Common myeloid progenitor, CD34-positive (primary cell): ENCODE measurements at regions of chr3 and their contacts with region 1.

Region 1: GRCh38 chr3:14467814-14468620 is 65.6 kb downstream of the SLC6A6 start:
- DNase-seq: peak; percentile 14 to 49 (median 32)
- H3K4me3 ChIP-seq: no peak overlapping the region
- H3K27ac ChIP-seq: no peak overlapping the region
- H3K4me1 ChIP-seq: no peaks in the 10 kb centered on the region
- H3K27me3 ChIP-seq: no peaks in the 10 kb centered on the region

Region 2: DNA sequence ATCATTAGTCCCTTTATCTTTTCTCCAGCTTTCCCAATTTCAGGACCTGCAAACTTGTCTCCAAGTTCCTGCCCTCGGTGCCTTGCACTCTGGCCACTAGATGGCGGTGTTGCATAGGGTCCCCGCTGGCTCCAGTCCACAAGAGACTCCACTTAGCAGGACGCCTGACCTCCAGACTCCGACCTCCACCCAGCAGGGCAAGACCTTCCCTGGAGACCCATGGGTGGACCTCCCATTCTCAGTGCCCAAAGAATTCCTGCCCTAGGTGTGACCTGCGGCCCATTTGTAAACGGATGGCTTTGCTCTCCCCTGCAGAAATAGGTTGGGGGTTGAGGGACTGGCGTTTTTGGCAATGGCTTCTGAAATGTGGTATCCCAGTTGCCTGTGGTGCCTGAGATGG is 206.8 kb before region 1 on chr3:
- CTCF ChIA-PET with region 1: interaction called, 123 read pairs
- POLR2A ChIA-PET with region 1: interaction called, 3 read pairs
- DNase-seq: peak; percentile 59 to 68 (median 65)
- H3K4me3 ChIP-seq: no peak overlapping the region
- H3K27ac ChIP-seq: no peak overlapping the region
- H3K4me1 ChIP-seq: peaks cover 0 to 4% (median 2%) of the 10 kb centered on the region in 4 experiments
- H3K27me3 ChIP-seq: peaks cover 0 to 2% (median 0%) of the 10 kb centered on the region in 5 experiments

Region 3: DNA sequence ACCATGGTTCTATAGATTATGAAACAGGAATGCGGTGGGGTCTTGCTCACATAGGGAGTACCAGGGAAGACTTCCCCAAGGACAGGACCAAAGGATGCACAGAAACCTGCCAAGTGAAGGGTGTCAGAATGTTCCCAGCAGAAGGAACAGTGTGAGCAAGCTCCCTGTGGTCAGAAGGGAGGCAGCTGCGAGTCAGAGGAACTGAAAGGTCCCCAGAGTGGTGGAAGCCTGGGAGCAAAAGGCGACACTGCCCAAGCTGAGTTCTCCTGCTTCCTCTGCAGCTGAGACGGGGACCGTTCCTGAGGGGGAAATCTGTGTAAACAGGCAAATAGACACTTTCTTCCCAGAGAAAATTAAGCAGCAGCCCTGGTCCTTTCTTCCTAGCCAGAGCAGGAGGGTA is 79.8 kb before region 1 on chr3:
- CTCF ChIA-PET with region 1: interaction called, 14 read pairs
- POLR2A ChIA-PET with region 1: no interaction called
- DNase-seq: no peak
- H3K4me3 ChIP-seq: no peak overlapping the region
- H3K27ac ChIP-seq: no peak overlapping the region
- H3K4me1 ChIP-seq: peaks cover 0 to 14% (median under 1%) of the 10 kb centered on the region in 4 experiments
- H3K27me3 ChIP-seq: no peaks in the 10 kb centered on the region

Region 4: GRCh38 chr3:14431892-14432834 is 35.9 kb before region 1 on chr3:
- CTCF ChIA-PET with region 1: interaction called, 30 read pairs
- POLR2A ChIA-PET with region 1: no interaction called
- DNase-seq: peak; percentile 97 to 99 (median 99)
- H3K4me3 ChIP-seq: peak overlapping the region in 5 of 7 experiments; percentile 16 to 62 (median 49)
- H3K27ac ChIP-seq: peak overlapping the region; percentile 90 to 94
- H3K4me1 ChIP-seq: peaks cover 22 to 97% (median 89%) of the 10 kb centered on the region in 4 experiments
- H3K27me3 ChIP-seq: no peaks in the 10 kb centered on the region

Region 5: DNA sequence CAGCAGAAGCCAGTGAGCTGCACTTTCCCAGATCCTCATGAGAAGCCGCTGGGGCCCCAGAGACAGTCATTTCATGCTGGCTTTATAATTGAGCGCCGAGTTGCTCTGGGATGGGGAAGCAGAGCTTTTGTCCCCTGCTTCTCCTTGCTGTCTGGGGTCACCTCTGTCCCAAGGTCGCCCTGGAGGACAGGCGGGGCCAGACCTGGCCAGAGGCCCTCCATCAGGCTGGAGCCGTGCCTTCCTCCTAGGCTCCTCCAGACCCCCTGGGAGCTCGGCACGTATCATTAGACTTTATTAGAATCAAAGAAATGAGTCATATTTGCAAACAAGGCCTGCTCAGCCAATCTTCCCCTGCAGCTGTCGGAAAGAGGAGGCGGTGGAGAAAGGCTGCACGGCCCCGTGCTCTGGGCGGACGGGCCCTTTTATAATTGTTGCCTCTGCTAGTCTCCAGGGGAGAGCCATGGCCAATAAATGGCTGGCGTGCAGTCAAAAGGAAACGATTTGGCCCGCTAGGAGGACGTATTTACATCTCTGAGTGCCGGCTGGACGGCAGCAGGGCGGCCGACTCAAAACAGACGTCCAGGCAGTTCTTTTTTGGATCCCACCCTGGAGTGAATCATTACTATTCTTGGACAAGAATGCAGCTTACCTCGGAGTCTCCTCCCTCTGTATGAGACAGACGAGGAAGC is 15.2 kb before region 1 on chr3:
- CTCF ChIA-PET with region 1: interaction called, 23 read pairs
- POLR2A ChIA-PET with region 1: no interaction called
- DNase-seq: no peak
- H3K4me3 ChIP-seq: no peak overlapping the region
- H3K27ac ChIP-seq: no peak overlapping the region
- H3K4me1 ChIP-seq: peaks cover 0 to 10% (median 3%) of the 10 kb centered on the region in 4 experiments
- H3K27me3 ChIP-seq: no peaks in the 10 kb centered on the region